ENCODE measurements at regions of chr6 and their contacts with region 1.

Region 1: DNA sequence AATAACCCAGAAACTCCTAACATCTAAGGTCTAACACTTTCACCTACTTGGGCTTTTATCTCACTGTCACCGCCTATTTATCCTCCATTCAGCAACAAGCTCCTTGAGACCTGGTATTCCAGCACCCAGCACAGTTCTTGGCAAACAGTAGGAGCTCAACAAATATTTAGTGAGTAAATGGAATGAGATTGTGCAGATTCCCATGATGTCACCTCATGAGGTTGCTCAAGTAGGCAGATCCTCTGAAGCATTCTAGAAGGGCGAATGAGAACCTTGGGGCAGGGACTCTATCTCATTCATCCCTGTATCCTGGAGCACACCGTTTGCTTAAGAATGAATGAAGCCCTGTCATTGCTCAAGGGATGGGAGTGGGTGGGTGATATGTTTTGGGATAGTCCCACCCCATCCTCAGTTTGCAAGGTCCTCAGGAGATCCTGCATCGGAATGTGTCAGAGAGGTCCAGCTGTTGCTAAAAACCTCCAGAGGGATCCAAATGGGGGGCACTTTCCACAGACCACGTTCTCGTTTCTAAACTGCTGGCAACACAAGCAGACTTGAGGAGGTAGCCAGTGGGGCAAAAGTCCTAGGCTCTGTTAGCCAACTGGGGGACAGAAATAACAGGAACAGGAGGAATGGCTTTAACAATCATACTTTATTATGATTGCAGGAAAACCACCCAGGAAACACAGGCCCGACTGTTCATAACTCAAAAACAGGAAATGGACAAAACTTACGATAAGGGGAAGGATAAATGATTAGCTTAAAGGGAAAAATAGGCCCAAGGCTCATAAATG is 42.0 kb downstream of the EDN1 start:
- DNase-seq: no peak
- ATAC-seq: no peak
- H3K4me3 ChIP-seq: no peak overlapping the region
- H3K27ac ChIP-seq: no peak overlapping the region
- H3K4me1 ChIP-seq: peaks cover 21% of the 10 kb centered on the region
- H3K27me3 ChIP-seq: no peaks in the 10 kb centered on the region
- CTCF ChIP-seq: no peak
- EP300 ChIP-seq: no peak
- POLR2A ChIP-seq: no peak
- RAD21 ChIP-seq: no peak

Region 2: DNA sequence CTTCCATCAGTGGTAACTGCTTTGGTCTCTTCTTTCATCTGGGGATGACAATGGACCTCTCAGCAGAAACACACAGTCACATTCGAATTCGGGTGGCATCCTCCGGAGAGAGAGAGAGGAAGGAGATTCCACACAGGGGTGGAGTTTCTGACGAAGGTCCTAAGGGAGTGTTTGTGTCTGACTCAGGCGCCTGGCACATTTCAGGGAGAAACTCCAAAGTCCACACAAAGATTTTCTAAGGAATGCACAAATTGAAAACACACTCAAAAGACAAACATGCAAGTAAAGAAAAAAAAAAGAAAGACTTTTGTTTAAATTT is 35.9 kb before region 1 on chr6:
- CTCF ChIA-PET with region 1: interaction called, 19 read pairs
- POLR2A ChIA-PET with region 1: interaction called, 11 read pairs
- RAD21 ChIA-PET with region 1: interaction called, 54 read pairs
- SMC1A ChIA-PET with region 1: interaction called, 97 read pairs
- in situ Hi-C with region 1: no loop called
- intact Hi-C with region 1: loop called (anchors 2 kb)
- DNase-seq: no peak
- ATAC-seq: no peak
- H3K4me3 ChIP-seq: no peak overlapping the region
- H3K27ac ChIP-seq: no peak overlapping the region
- H3K4me1 ChIP-seq: peaks cover 8% of the 10 kb centered on the region
- H3K27me3 ChIP-seq: no peaks in the 10 kb centered on the region
- CTCF ChIP-seq: no peak
- EP300 ChIP-seq: no peak
- POLR2A ChIP-seq: no peak
- RAD21 ChIP-seq: no peak

Region 3: DNA sequence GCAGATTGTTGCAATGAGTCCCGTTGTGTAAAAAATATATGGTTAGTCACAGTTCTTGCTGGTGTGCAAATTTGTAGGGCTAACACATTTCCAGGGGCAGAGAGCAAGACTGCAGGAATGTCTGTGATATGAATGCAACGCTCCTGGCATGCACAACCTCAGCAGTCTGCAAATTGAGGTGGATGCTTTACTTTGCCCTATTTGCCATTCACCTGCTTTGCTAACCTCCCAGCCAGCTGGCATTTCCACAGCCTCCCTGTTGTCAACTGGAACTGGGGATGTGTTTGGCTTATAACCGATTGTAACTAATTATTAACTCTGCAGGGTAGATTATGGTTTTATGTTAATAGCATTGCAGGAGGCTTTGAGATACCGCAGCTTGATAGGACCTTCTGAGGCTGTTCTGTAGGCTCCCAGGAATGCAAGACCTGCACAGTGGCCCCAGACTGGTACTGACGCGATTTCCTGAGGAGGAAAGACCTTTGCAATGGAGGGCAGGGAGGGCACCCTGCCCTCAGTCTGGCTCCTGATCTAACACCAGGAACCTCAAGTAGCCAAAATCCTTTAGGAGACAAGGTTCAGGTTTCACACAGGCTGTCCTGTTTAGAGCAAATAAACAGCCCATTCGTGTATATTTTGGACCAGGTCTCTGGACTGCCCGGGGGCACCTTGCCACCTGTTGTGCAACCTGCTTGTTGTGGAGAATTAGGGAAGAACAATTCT is 11.4 kb after region 1 on chr6:
- CTCF ChIA-PET with region 1: interaction called, 14 read pairs
- POLR2A ChIA-PET with region 1: interaction called, 4 read pairs
- RAD21 ChIA-PET with region 1: interaction called, 4 read pairs
- SMC1A ChIA-PET with region 1: interaction called, 37 read pairs
- in situ Hi-C with region 1: no loop called
- intact Hi-C with region 1: no loop called
- DNase-seq: no peak
- ATAC-seq: no peak
- H3K4me3 ChIP-seq: no peak overlapping the region
- H3K27ac ChIP-seq: no peak overlapping the region
- H3K4me1 ChIP-seq: no peaks in the 10 kb centered on the region
- H3K27me3 ChIP-seq: no peaks in the 10 kb centered on the region
- CTCF ChIP-seq: no peak
- EP300 ChIP-seq: no peak
- POLR2A ChIP-seq: no peak
- RAD21 ChIP-seq: no peak

Region 4: GRCh38 chr6:12354499-12354898 is 22.3 kb after region 1 on chr6:
- CTCF ChIA-PET with region 1: interaction called, 81 read pairs
- POLR2A ChIA-PET with region 1: interaction called, 29 read pairs
- RAD21 ChIA-PET with region 1: interaction called, 152 read pairs
- SMC1A ChIA-PET with region 1: interaction called, 270 read pairs
- in situ Hi-C with region 1: no loop called
- intact Hi-C with region 1: loop called (anchors 1 kb)
- DNase-seq: peak; percentile 91
- ATAC-seq: peak; percentile 77
- H3K4me3 ChIP-seq: no peak overlapping the region
- H3K27ac ChIP-seq: peak overlapping the region; percentile 56
- H3K4me1 ChIP-seq: peaks cover 47% of the 10 kb centered on the region
- H3K27me3 ChIP-seq: no peaks in the 10 kb centered on the region
- CTCF ChIP-seq: no peak
- EP300 ChIP-seq: peak; percentile 43 to 56; a peak in 2 of 4 replicates
- POLR2A ChIP-seq: no peak
- RAD21 ChIP-seq: no peak

Region 5: DNA sequence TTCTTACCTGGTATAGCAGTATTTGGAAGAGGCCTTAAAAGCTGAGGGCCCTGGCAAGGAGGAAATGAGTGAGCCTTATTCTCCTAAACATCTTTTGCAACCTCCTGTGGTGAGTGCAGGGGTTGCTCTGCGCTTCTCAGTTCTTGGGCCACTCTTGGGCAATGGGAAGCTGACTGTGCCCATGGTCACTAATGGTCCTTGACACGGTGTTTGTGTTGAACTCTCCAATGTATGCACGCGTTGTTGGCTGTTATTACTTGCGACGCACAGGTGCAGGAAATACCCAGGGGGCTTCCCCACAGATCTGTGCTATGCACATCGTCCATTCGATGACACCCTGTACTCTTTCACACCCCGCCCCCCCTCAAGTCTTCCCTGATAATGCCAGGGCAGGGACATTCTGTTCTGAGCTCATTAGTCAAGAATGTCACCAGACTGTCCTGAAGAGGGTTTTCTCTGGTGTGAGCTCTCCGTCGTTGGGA is 37.7 kb after region 1 on chr6:
- CTCF ChIA-PET with region 1: interaction called, 29 read pairs
- POLR2A ChIA-PET with region 1: interaction called, 12 read pairs
- RAD21 ChIA-PET with region 1: interaction called, 50 read pairs
- SMC1A ChIA-PET with region 1: interaction called, 100 read pairs
- in situ Hi-C with region 1: no loop called
- intact Hi-C with region 1: loop called (anchors 2 kb)
- DNase-seq: peak; percentile 73
- ATAC-seq: peak; percentile 92
- H3K4me3 ChIP-seq: no peak overlapping the region
- H3K27ac ChIP-seq: peak overlapping the region; percentile 35
- H3K4me1 ChIP-seq: peaks cover 13% of the 10 kb centered on the region
- H3K27me3 ChIP-seq: no peaks in the 10 kb centered on the region
- CTCF ChIP-seq: peak; percentile 25 to 41 (median 30); a peak in 4 of 6 replicates
- EP300 ChIP-seq: peak; percentile 55 to 78; a peak in 2 of 4 replicates
- POLR2A ChIP-seq: no peak
- RAD21 ChIP-seq: peak; percentile 62

Region 6: DNA sequence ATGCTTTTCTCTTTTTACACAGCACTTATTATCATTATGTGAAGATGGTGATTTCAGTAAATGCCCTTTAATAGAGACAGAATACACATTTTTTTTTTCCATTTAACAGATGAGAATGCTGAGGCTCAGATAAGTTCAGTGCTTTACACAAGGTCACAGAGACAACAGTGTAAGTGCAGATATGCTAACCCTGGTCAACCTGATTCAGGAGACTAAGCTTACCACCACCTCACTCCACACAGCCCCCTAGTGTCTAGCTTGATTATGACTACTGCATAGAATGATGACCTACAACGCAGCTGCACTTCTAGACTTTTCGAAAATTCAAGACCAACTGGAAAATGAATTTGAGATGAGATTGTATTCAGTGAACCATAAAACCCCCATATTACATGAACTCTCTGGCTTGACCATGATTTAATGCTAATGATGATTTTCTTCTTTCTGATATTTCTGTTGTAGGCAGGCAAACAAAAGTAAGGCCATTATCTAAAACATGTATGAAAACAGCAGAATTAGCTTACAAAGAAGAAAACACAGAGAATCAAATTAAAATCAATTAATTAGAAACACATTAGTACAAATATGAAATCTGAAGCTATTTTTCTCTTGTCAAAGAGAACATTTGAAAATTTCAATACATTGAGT is 172.3 kb after region 1 on chr6:
- CTCF ChIA-PET with region 1: interaction called, 13 read pairs
- POLR2A ChIA-PET with region 1: no interaction called
- RAD21 ChIA-PET with region 1: interaction called, 23 read pairs
- SMC1A ChIA-PET with region 1: interaction called, 19 read pairs
- in situ Hi-C with region 1: no loop called
- intact Hi-C with region 1: no loop called
- DNase-seq: peak; percentile 32
- ATAC-seq: peak; percentile 99
- H3K4me3 ChIP-seq: no peak overlapping the region
- H3K27ac ChIP-seq: no peak overlapping the region
- H3K4me1 ChIP-seq: no peaks in the 10 kb centered on the region
- H3K27me3 ChIP-seq: no peaks in the 10 kb centered on the region
- CTCF ChIP-seq: peak; percentile 58 to 76 (median 68)
- EP300 ChIP-seq: no peak
- POLR2A ChIP-seq: no peak
- RAD21 ChIP-seq: peak; percentile 65